CD14-positive monocyte (primary cell): ENCODE measurements at regions of chr5 and their contacts with region 1.

Region 1: DNA sequence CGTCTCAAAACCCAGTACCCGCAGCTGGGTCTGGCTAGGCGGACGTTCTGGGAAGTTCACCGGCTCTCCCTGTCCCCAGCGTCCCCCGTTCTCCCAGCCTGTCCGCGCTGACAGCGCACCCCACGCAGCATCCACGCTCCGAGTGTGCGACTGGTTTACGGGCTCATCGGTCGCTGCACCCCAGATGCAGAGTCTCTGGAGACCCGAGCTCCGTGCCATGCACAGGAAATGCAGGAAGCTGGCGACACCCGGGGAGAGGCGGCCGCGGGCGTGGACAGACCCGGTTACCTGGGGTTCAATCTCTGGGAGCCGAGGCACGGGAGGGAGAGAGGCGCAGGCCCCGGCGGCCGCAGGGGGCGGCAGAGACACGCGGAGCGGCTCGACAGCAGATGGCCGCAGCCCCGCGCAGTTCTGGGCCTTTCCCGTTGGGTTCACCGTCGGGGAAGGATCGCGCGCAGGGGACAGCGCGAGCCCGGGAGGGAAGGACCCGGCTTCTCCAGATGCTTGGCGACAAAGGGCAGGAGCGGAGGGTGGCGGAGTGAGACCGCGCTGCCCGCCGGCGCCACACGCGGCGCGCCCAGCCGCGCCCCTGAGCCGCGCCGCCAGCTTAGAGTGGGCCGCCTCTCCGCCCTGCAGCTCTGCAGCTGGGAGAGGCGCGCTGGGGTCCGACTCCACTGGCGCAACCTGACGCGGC is 558 bp downstream of the SHROOM1 start:
- DNase-seq: peak; percentile 68 to 76 (median 71)
- H3K4me3 ChIP-seq: peak overlapping the region; percentile 33 to 76 (median 42)
- H3K4me3 Mint-ChIP-seq: peak overlapping the region; percentile 91 to 96
- H3K27ac ChIP-seq: peak overlapping the region in 1 of 2 donors; percentile 71
- H3K27ac Mint-ChIP-seq: peak overlapping the region; percentile 75 to 92 (median 81)
- H3K4me1 ChIP-seq: peaks cover 17 to 36% of the 10 kb centered on the region in 2 donors
- H3K4me1 Mint-ChIP-seq: peaks cover 31% of the 10 kb centered on the region
- H3K27me3 ChIP-seq: peaks cover 27 to 56% of the 10 kb centered on the region in 2 donors
- H3K27me3 Mint-ChIP-seq: peaks cover 58 to 78% (median 58%) of the 10 kb centered on the region in 3 donors
- CTCF ChIP-seq: peak; percentile 94

Region 2: GRCh38 chr5:132883261-132883834 is 53.5 kb after region 1 on chr5:
- intact Hi-C with region 1: loop called (anchors 2 to 5 kb)
- DNase-seq: peak; percentile 72 to 85 (median 82)
- H3K4me3 ChIP-seq: no peak overlapping the region
- H3K4me3 Mint-ChIP-seq: no peak overlapping the region
- H3K27ac ChIP-seq: no peak overlapping the region
- H3K27ac Mint-ChIP-seq: no peak overlapping the region
- H3K4me1 ChIP-seq: no peaks in the 10 kb centered on the region
- H3K4me1 Mint-ChIP-seq: peaks cover 5% of the 10 kb centered on the region
- H3K27me3 ChIP-seq: no peaks in the 10 kb centered on the region
- H3K27me3 Mint-ChIP-seq: no peaks in the 10 kb centered on the region
- CTCF ChIP-seq: peak; percentile 84

Region 3: GRCh38 chr5:133203317-133204305 is 373.7 kb after region 1 on chr5:
- intact Hi-C with region 1: no loop called
- DNase-seq: no peak
- H3K4me3 ChIP-seq: no peak overlapping the region
- H3K4me3 Mint-ChIP-seq: no peak overlapping the region
- H3K27ac ChIP-seq: no peak overlapping the region
- H3K27ac Mint-ChIP-seq: no peak overlapping the region
- H3K4me1 ChIP-seq: no peaks in the 10 kb centered on the region
- H3K4me1 Mint-ChIP-seq: no peaks in the 10 kb centered on the region
- H3K27me3 ChIP-seq: no peaks in the 10 kb centered on the region
- H3K27me3 Mint-ChIP-seq: peaks cover 6 to 14% (median 8%) of the 10 kb centered on the region in 3 donors
- CTCF ChIP-seq: no peak